ENCODE measurements at regions of chr1 and their contacts with region 1.

Region 1: GRCh38 chr1:180154325-180155181 is at the start of gene QSOX1:
- DNase-seq: peak; percentile 86
- ATAC-seq: peak; percentile 80
- H3K4me3 ChIP-seq: peak within 1 kb of the TSS; percentile 94
- H3K27ac ChIP-seq: peak within 1 kb of the TSS; percentile 99
- H3K4me1 ChIP-seq: peaks cover 33% of the 10 kb centered on the region
- H3K27me3 ChIP-seq: no peaks in the 10 kb centered on the region
- CTCF ChIP-seq: 0 out of 2 replicates have a peak, but pooled peaks have one; percentile 11
- POLR2A ChIP-seq: peak; percentile 95
- RAD21 ChIP-seq: peak; percentile 18
- total RNA-seq, gene QSOX1: 93.3 and 102 TPM in 2 replicates

Region 2: DNA sequence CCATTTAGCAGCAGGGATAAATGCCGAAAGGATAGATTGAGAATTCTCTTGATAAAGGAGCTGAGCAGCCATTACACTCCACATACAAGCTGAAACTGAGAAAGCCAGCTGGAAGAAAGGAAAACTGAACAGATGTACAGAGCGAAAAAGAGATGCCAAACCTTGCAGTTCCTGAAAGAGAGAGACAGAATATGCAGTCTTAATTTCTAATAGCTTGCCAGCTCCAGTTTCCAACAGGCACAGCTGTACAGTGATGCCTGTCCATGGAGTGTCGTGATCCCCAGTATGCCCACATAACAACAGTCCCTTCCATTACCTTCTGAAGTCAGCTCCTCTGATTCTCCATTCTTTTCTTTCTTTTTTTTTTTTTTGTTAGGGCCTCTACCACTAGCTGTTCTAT is 947.7 kb before region 1 on chr1:
- CTCF ChIA-PET with region 1: no interaction called
- POLR2A ChIA-PET with region 1: no interaction called
- dilution Hi-C with region 1: no loop called
- in situ Hi-C with region 1: no loop called
- intact Hi-C with region 1: no loop called
- DNase-seq: no peak
- ATAC-seq: peak; percentile 46
- H3K4me3 ChIP-seq: no peak overlapping the region
- H3K27ac ChIP-seq: no peak overlapping the region
- H3K4me1 ChIP-seq: peaks cover 2% of the 10 kb centered on the region; the same call in 1 of the 2 replicates
- H3K27me3 ChIP-seq: no peaks in the 10 kb centered on the region
- CTCF ChIP-seq: no peak
- POLR2A ChIP-seq: no peak
- RAD21 ChIP-seq: no peak

Region 3: GRCh38 chr1:179706339-179706941 is 448.1 kb before region 1 on chr1:
- CTCF ChIA-PET with region 1: no interaction called
- POLR2A ChIA-PET with region 1: no interaction called
- dilution Hi-C with region 1: no loop called
- in situ Hi-C with region 1: loop called (anchors 25 kb)
- intact Hi-C with region 1: loop called (anchors 10 kb)
- DNase-seq: peak; percentile 67
- ATAC-seq: peak; percentile 62
- H3K4me3 ChIP-seq: no peak overlapping the region
- H3K27ac ChIP-seq: no peak overlapping the region
- H3K4me1 ChIP-seq: no peaks in the 10 kb centered on the region
- H3K27me3 ChIP-seq: peaks cover 20% of the 10 kb centered on the region
- CTCF ChIP-seq: peak; percentile 91
- POLR2A ChIP-seq: no peak
- RAD21 ChIP-seq: peak; percentile 92

Region 4: DNA sequence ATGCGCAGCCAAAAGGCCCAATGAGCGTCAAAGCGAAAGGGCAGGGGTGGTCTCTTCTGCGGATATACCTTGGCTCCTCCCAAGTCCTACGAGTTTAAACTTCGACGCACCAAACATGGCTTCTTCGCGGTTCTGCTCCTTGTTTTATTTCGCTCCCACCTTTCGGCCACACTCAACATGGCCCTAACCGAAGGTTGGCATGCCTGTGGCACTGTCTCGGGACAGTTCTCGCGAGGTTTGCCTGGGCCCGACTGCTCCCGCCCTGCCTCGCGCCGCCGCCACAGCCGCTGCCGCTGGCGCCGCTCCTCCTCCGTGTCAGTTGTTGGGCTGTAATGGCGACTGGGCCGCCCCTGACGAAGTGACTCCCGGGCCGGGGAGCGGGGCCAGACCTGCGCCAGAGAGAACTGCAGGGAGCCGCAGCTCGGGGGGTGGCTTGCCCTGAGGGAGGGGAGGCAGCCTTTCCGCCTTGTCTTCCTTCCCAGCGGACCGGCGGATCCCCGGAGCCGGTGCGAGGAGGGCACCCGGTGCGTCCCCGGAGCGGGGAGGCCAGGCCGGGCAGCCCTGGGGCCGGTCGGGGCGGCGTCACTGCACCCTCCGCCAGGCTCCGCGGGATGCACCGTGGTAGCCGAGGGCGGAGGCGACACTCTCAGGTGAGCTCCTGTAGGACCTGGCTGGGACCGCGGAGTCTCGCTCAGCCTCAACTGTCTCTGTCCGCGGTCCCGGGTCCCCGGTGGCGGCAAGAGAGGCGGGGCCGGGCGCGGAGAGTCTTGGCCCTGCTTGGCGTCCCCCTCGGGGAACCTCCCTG is 199.9 kb before region 1 on chr1 and contains the start of gene CEP350:
- CTCF ChIA-PET with region 1: no interaction called
- POLR2A ChIA-PET with region 1: no interaction called
- dilution Hi-C with region 1: no loop called
- in situ Hi-C with region 1: no loop called
- intact Hi-C with region 1: loop called (anchors 1 kb)
- DNase-seq: peak; percentile 99
- ATAC-seq: peak; percentile 96
- H3K4me3 ChIP-seq: peak within 1 kb of the TSS; percentile 76
- H3K27ac ChIP-seq: peak within 1 kb of the TSS; percentile 84
- H3K4me1 ChIP-seq: peaks cover 2% of the 10 kb centered on the region; the same call in 1 of the 2 replicates
- H3K27me3 ChIP-seq: no peaks in the 10 kb centered on the region
- CTCF ChIP-seq: no peak
- POLR2A ChIP-seq: peak; percentile 70
- RAD21 ChIP-seq: no peak
- total RNA-seq, gene CEP350: 36.4 and 55.8 TPM in 2 replicates

Region 5: DNA sequence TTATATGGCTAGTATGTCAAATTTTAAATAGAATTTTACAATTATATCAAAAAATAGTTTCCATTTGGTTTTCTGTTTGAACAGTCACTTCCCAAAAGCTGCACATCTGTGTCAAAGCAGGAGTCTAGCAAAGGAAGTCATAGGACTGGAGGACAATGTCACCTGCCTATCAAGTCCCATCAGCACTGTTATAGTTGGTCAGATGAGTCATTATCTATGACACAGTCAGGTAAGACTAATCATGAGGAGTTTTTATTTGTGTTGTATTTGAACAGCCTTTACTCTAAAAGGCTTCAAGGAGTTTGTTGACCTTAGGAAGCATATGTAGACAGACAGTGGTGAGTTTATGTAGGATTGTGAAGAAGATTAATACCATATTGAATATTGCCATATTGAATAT is 74.1 kb before region 1 on chr1:
- CTCF ChIA-PET with region 1: interaction called, 4 read pairs
- POLR2A ChIA-PET with region 1: no interaction called
- dilution Hi-C with region 1: no loop called
- in situ Hi-C with region 1: no loop called
- intact Hi-C with region 1: loop called (anchors 5 kb)
- DNase-seq: no peak
- ATAC-seq: no peak
- H3K4me3 ChIP-seq: no peak overlapping the region
- H3K27ac ChIP-seq: no peak overlapping the region
- H3K4me1 ChIP-seq: no peaks in the 10 kb centered on the region
- H3K27me3 ChIP-seq: no peaks in the 10 kb centered on the region
- CTCF ChIP-seq: no peak
- POLR2A ChIP-seq: no peak
- RAD21 ChIP-seq: no peak

Region 6: DNA sequence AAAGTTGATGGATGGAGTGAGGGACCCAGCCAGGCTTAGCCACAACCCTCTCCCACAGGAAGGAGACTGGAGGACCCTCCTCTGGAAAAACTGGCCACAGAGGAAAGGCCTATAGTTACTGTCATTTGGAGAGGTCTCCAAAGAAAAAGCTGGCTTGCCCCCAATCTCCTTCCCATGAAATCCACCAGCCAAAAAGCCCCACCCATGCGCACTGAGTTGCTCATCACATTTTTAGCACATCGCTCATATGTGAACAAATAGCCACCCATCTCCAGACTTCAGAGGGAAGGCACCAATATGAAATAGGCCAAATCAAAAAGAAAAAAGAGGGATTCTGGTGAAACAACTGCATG is 36.8 kb before region 1 on chr1:
- CTCF ChIA-PET with region 1: no interaction called
- POLR2A ChIA-PET with region 1: interaction called, 6 read pairs
- dilution Hi-C with region 1: no loop called
- in situ Hi-C with region 1: no loop called
- intact Hi-C with region 1: loop called (anchors 1 kb)
- DNase-seq: peak; percentile 85
- ATAC-seq: peak; percentile 40
- H3K4me3 ChIP-seq: no peak overlapping the region
- H3K27ac ChIP-seq: peak overlapping the region; percentile 75
- H3K4me1 ChIP-seq: peaks cover 33% of the 10 kb centered on the region
- H3K27me3 ChIP-seq: no peaks in the 10 kb centered on the region
- CTCF ChIP-seq: no peak
- POLR2A ChIP-seq: no peak
- RAD21 ChIP-seq: no peak

Region 7: DNA sequence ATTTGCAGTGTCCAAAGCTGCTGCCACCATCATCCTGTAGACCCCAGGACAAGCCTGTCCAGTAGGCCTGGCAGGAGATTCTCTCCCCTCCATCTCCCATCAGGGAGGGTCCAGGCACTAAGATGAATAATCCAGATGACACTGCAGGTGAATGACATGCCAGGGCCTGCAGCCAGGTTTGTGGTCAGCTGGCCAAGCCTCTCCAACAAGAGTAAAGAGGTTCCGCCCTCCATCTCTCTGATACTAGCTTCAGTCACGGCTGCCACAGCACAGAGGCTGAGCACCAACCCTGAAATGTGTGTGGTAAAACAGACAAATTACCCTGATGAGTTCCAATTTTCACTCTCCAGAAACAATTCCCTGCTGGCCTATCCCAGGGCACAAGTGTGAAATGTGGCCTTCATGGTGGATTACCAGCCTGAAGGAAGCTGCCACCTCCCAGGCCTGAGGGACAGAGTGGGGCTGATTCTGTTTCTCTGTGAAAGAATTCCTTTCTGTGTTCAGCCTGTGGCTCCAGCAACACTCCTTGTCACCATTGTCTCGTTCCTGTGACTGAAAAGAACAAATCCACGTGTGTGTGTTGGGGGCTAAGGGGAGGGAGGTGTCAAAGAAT is 55.6 kb after region 1 on chr1:
- CTCF ChIA-PET with region 1: no interaction called
- POLR2A ChIA-PET with region 1: no interaction called
- dilution Hi-C with region 1: no loop called
- in situ Hi-C with region 1: no loop called
- intact Hi-C with region 1: no loop called
- DNase-seq: no peak
- ATAC-seq: no peak
- H3K4me3 ChIP-seq: no peak overlapping the region
- H3K27ac ChIP-seq: no peak overlapping the region
- H3K4me1 ChIP-seq: no peaks in the 10 kb centered on the region
- H3K27me3 ChIP-seq: no peaks in the 10 kb centered on the region
- CTCF ChIP-seq: no peak
- POLR2A ChIP-seq: no peak; the same call in 1 of the 2 replicates
- RAD21 ChIP-seq: no peak

Measured in IMR-90 (cell line).